Spleen (tissue), 13 donors: ENCODE measurements at regions of chr15 and their contacts with region 1.

Region 1: GRCh38 chr15:60362321-60363086 is 35.3 kb downstream of the ANXA2 start:
- DNase-seq: no peak
- H3K4me3 ChIP-seq: no peak overlapping the region
- H3K27ac ChIP-seq: peak overlapping the region in 6 of 8 donors; percentile 17 to 52 (median 26)
- H3K4me1 ChIP-seq: peaks cover 15 to 61% (median 37%) of the 10 kb centered on the region in 6 donors
- H3K27me3 ChIP-seq: no peaks in the 10 kb centered on the region
- CTCF ChIP-seq: no peak
- POLR2A ChIP-seq: no peak

Region 2: DNA sequence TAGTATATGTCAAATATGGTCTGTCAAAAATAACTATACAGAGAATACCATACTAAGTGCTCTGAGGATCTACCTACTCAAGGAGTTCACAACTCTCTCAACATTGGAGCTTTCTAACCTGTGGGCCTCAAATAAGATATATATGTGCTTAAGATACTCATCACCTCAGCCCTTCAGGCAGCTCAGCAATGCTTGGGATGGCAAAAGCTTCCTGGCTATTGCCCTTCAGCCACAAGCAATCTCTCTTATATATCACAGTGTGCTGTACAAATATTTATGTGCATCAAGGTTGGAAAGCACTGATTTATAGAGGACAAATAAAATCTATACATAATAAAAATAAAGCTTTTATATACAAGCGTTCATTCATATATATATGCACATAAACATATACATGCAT is 76.1 kb after region 1 on chr15:
- intact Hi-C with region 1: loop called (anchors 5 kb)
- DNase-seq: no peak
- H3K4me3 ChIP-seq: no peak overlapping the region
- H3K27ac ChIP-seq: no peak overlapping the region
- H3K4me1 ChIP-seq: no peaks in the 10 kb centered on the region
- H3K27me3 ChIP-seq: no peaks in the 10 kb centered on the region
- CTCF ChIP-seq: no peak
- POLR2A ChIP-seq: no peak

Region 3: DNA sequence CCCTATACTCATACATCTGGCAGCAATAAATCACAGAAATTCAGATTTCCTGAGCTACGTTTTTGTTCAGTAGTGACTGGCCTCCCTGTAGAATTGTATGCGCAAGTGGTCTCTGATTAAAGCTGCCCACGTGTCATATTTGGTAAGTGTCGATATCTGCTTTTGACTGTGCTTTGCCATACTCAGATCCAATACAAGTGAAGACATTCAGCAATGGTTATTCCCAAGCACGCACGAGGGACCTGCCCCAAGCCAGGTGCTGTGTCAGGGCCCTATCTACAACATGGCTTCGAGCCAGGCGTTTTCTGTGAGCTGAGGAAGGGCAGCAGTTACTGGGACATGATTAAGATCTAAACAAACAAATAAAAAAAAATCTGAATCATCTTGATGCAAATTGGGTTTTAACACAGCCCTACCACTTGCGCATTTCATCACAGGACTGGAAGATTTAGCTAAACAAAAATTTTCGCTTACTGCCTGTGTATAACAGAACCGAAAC is 163.7 kb after region 1 on chr15:
- intact Hi-C with region 1: loop called (anchors 5 kb)
- DNase-seq: no peak
- H3K4me3 ChIP-seq: no peak overlapping the region
- H3K27ac ChIP-seq: peak overlapping the region in 1 of 8 donors; percentile 30
- H3K4me1 ChIP-seq: peaks cover 0 to 45% (median 5%) of the 10 kb centered on the region in 6 donors
- H3K27me3 ChIP-seq: no peaks in the 10 kb centered on the region
- CTCF ChIP-seq: no peak
- POLR2A ChIP-seq: no peak